ENCODE measurements at regions of chr17 and their contacts with region 1.

Region 1: GRCh38 chr17:29293890-29294579 is at the start of gene NUFIP2:
- DNase-seq: peak; percentile 92

Region 2: GRCh38 chr17:29235904-29236303 is 58.1 kb before region 1 on chr17:
- CTCF ChIA-PET with region 1: no interaction called
- POLR2A ChIA-PET with region 1: no interaction called
- DNase-seq: no peak

Region 3: GRCh38 chr17:29252101-29252866 is 41.8 kb before region 1 on chr17:
- CTCF ChIA-PET with region 1: interaction called, 6 read pairs
- POLR2A ChIA-PET with region 1: interaction called, 13 read pairs
- DNase-seq: peak; percentile 12

Region 4: GRCh38 chr17:29344311-29344843 is 50.3 kb after region 1 on chr17:
- CTCF ChIA-PET with region 1: no interaction called
- POLR2A ChIA-PET with region 1: interaction called, 10 read pairs
- DNase-seq: no peak

Measured in HEK293T (cell line).